GM10248 (cell line): ENCODE measurements at regions of chr17 and their contacts with region 1.

Region 1: GRCh38 chr17:64950871-64951270 is 31.6 kb upstream of the LRRC37A3 start:
- DNase-seq: no peak
- CTCF ChIP-seq: no peak

Region 2: GRCh38 chr17:64964796-64965195 is 13.9 kb after region 1 on chr17:
- CTCF ChIA-PET with region 1: interaction called, 12 read pairs
- POLR2A ChIA-PET with region 1: no interaction called
- DNase-seq: no peak
- CTCF ChIP-seq: no peak

Region 3: GRCh38 chr17:64974750-64975328 is 24.0 kb after region 1 on chr17:
- CTCF ChIA-PET with region 1: no interaction called
- POLR2A ChIA-PET with region 1: no interaction called
- DNase-seq: no peak
- CTCF ChIP-seq: no peak

Region 4: GRCh38 chr17:64992325-64992811 is 41.5 kb after region 1 on chr17:
- CTCF ChIA-PET with region 1: no interaction called
- POLR2A ChIA-PET with region 1: no interaction called
- DNase-seq: no peak
- CTCF ChIP-seq: no peak

Region 5: GRCh38 chr17:65896889-65897288 is 946.0 kb after region 1 on chr17:
- CTCF ChIA-PET with region 1: no interaction called
- POLR2A ChIA-PET with region 1: interaction called, 11 read pairs
- DNase-seq: no peak
- CTCF ChIP-seq: no peak